Activated T-helper 1 cell treated with anti-CD3 and anti-CD28 coated beads, Interleukin-12 subunit alpha, Interleukin-12 subunit beta, Interleukin-2, Interleukin-4 antibody, amounts not matched to agents 30 ng/mL and 10 ng/mL and 1 ng/mL, durations not matched to agents 14 hours and 24 hours and 36 hours (primary cell): ENCODE measurements at regions of chr1 and their contacts with region 1.

Region 1: GRCh38 chr1:46581681-46582455 is 22.2 kb downstream of the MKNK1 start:
- DNase-seq: peak; percentile 45
- H3K4me3 Mint-ChIP-seq: peak overlapping the region; percentile 70
- H3K27ac Mint-ChIP-seq: peak overlapping the region; percentile 96
- H3K4me1 Mint-ChIP-seq: peaks cover 58% of the 10 kb centered on the region
- H3K27me3 Mint-ChIP-seq: no peaks in the 10 kb centered on the region

Region 2: DNA sequence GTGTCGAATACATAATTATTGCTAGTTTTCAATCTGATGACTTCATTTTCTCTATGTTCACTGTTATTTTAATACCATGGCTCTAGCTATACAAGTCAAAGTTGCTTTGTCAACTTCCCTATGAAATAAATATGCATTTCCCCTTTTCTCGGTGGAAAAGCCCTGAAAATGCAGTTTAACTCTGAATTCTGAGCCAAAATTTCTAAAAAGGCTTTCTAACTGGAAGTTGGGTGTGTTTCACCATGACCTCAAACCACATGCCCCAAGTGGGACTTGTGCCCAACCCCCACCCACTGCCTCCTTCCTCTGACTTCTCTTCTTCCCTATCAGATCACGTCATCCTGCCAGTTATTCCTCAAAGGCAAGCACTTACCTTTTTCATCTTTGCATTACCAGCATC is 13.3 kb after region 1 on chr1:
- intact Hi-C with region 1: loop called (anchors 1 kb)
- DNase-seq: no peak
- H3K4me3 Mint-ChIP-seq: peak overlapping the region; percentile 26
- H3K27ac Mint-ChIP-seq: peak overlapping the region; percentile 36
- H3K4me1 Mint-ChIP-seq: peaks cover 87% of the 10 kb centered on the region
- H3K27me3 Mint-ChIP-seq: no peaks in the 10 kb centered on the region

Region 3: DNA sequence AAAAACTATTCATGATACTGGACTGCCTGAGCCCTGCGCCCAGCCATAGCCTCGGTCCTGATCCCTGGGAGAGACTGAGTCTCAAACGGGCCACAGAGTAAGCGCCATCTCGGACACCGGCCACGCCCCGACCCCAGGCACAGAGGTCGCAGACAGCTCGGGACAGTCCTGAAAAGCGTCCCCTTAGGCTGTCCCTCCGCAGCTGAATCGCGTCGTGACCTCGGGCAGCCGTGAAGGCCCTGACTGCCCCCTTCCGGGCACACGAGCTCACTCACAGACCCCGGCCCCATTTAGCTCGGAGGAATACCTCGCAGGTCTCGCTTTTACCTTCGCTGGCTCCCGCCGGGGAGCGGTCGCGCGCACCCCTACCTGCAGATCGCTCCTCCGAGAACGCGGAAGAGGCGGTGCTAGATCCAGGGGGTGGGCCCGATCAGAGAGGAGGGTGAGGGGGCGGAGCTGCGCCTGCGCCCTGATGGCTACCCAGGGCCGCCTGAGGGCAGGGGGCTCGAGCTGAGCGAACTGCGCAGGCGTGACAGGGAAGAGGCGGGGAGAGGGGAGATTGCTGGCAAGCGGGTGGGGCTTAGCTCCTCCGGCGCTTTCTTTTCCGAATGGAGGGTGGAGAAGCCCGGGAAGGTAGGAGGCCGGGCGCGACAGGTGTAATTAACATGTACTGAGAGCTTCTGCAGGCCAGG is 22.1 kb after region 1 on chr1 and contains the start of gene MKNK1:
- intact Hi-C with region 1: loop called (anchors 1 kb)
- DNase-seq: peak; percentile 99
- H3K4me3 Mint-ChIP-seq: peak within 1 kb of the TSS; percentile 91
- H3K27ac Mint-ChIP-seq: peak within 1 kb of the TSS; percentile 88
- H3K4me1 Mint-ChIP-seq: peaks cover 67% of the 10 kb centered on the region
- H3K27me3 Mint-ChIP-seq: no peaks in the 10 kb centered on the region
- total RNA-seq, gene MKNK1: 48.7 TPM in 2 replicates

Region 4: DNA sequence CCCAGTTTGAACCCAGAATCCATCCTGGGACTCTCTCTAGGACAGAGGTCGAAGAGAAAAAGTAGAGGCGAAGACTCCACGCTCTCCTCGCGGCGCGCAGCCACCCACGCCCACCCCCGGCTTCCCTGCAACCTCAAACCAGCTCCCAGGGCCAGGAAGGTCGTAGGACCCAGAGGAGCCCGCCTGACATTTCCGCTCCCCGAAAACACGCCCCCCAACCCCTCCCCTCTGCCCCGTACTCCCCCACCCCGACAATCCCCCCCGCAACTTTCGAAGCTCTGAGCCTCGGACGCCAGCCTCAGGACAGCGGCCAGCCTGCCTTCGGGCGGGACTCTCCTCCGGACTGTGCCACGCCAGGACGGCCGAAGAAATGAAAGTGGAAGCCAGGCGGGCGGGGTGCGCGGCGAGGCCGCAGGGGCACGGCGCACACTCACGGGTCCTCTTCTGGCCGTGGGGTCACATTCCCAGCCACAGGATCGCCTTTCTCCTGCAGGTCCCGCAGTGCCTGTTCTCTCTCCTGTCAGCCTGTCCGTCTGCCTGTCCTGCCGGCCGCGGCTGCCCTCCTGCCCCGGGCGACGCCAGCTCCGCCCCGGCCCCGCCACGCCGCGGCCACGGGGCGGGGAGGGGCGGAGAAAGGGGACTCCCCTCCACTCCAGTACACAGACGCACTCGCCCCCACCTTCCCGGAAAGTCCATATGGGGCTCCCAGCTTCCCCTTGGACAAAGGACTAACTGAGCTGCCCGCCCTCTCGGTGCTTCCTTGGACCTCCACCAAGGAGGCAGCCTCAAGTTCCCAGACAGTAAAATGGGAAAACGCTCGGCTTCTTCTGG is 34.6 kb after region 1 on chr1 and contains the start of gene MOB3C:
- intact Hi-C with region 1: loop called (anchors 1 kb)
- DNase-seq: peak; percentile 51
- H3K4me3 Mint-ChIP-seq: peak within 1 kb of the TSS; percentile 90
- H3K27ac Mint-ChIP-seq: peak within 1 kb of the TSS; percentile 87
- H3K4me1 Mint-ChIP-seq: peaks cover 51% of the 10 kb centered on the region
- H3K27me3 Mint-ChIP-seq: peaks cover 2% of the 10 kb centered on the region
- total RNA-seq, gene MOB3C: 16.9 and 17.0 TPM in 2 replicates

Region 5: GRCh38 chr1:46667782-46668760 is 86.2 kb after region 1 on chr1 and contains the start of gene ATPAF1:
- intact Hi-C with region 1: loop called (anchors 5 kb)
- DNase-seq: peak; percentile 62
- H3K4me3 Mint-ChIP-seq: peak within 1 kb of the TSS; percentile 85
- H3K27ac Mint-ChIP-seq: peak within 1 kb of the TSS; percentile 58
- H3K4me1 Mint-ChIP-seq: peaks cover 25% of the 10 kb centered on the region
- H3K27me3 Mint-ChIP-seq: no peaks in the 10 kb centered on the region
- total RNA-seq, gene ATPAF1: 40.9 and 46.3 TPM in 2 replicates